ENCODE measurements at regions of chr12 and their contacts with region 1.

Region 1: GRCh38 chr12:100083308-100083707 is 59.4 kb downstream of the BLTP3B start:
- DNase-seq: no peak

Region 2: DNA sequence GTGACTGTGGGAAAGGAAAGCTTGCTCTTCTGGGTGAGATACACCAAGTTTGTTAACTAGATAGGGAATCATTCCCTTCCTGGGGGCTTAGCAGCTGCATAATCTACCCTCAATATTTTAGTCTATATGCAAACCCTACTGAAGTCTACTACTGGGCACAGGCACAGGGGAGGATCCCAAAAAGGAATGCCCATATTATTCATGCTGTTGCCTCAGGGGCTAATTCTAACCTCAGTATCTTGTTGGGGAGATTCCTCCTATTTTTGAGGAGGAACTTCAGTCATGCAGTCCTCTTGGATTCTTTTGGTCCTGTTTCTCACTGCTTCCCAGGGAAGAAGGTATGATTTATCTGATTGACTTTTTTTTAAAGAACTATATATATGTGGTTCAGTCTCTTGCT is 39.7 kb before region 1 on chr12:
- intact Hi-C with region 1: no loop called
- DNase-seq: no peak

Region 3: DNA sequence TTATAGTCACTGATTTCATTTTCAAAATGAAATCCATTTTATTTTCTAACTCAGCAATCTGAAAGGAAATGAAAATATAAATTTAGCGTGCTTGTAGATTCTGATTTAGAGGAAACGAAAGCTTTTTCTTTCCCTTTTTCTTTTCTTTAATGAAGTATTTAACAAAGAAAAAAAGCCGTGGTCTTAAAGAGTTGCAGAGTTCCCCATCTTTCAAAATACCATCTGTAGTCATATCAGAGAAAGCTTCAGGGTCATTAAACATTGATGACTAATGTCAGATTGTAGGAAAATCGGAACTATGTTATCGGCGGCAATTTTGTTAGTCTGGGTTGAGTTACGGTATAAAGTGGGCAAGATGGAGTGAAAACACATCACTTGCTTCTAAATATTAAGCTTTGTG is 1826.3 kb after region 1 on chr12:
- intact Hi-C with region 1: loop called in 1 of 2 experiments (anchors 10 kb)
- DNase-seq: no peak

Measured in posterior vena cava (tissue), 2 donors.